Right lobe of liver (tissue), 6 donors: ENCODE measurements at regions of chrX and their contacts with region 1.

Region 1: GRCh38 chrX:153460845-153461244 is 9.5 kb downstream of the HAUS7 start:
- DNase-seq: peak in 1 of 3 donors; percentile 57
- ATAC-seq: peak; percentile 60 to 81 (median 68)
- H3K4me3 ChIP-seq: no peak overlapping the region
- H3K27ac ChIP-seq: no peak overlapping the region
- H3K4me1 ChIP-seq: no peaks in the 10 kb centered on the region
- H3K27me3 ChIP-seq: no peaks in the 10 kb centered on the region
- CTCF ChIP-seq: peak; percentile 32 to 65 (median 52)
- POLR2A ChIP-seq: no peak

Region 2: GRCh38 chrX:153507484-153508178 is 46.8 kb after region 1 on chrX:
- intact Hi-C with region 1: loop called in 1 of 2 experiments (anchors 5 kb)
- DNase-seq: peak; percentile 75 to 86 (median 83)
- ATAC-seq: peak; percentile 82 to 94 (median 94)
- H3K4me3 ChIP-seq: no peak overlapping the region
- H3K27ac ChIP-seq: no peak overlapping the region
- H3K4me1 ChIP-seq: no peaks in the 10 kb centered on the region
- H3K27me3 ChIP-seq: no peaks in the 10 kb centered on the region
- CTCF ChIP-seq: peak; percentile 89 to 95 (median 92)
- POLR2A ChIP-seq: no peak

Region 3: DNA sequence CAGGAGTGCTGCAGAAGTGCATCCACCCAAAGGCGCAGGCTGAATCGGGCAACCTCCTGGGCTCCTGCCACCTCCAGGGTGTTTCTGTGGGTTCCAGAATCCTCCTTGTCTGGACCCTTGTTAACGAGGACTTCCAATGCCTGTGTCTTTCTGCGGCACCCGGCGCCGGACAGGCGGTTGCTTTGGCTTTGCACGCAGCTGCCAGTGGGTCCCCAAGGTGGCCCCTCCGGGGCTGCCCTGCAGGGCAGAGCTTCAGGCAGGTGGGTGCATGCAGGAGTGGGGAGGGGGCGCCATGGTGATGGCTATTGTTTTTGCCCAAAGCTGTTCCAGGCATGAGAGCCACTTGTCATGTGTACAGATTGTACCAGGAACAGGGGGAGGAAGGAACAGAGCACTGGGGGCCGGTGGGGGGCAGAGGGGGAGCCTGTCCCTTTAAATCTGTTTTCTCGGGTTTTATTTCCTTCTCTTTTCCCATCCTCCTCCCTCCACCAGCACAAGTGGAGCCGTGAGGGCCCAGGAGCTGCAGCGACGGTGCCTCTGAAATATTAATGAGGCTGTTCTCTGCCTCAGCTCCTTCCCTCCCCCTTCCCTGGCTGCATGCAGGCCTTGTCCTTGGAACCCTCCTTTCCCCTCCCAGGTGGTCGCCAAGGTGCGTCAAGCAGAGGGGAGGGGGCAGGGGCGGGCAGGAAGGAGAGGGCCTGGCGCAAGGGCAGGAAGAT is 69.7 kb after region 1 on chrX:
- intact Hi-C with region 1: no loop called
- DNase-seq: no peak
- ATAC-seq: no peak
- H3K4me3 ChIP-seq: no peak overlapping the region
- H3K27ac ChIP-seq: no peak overlapping the region
- H3K4me1 ChIP-seq: no peaks in the 10 kb centered on the region
- H3K27me3 ChIP-seq: peaks cover 0 to 5% of the 10 kb centered on the region in 2 donors
- CTCF ChIP-seq: no peak
- POLR2A ChIP-seq: no peak

Region 4: GRCh38 chrX:153625271-153626024 is 164.6 kb after region 1 on chrX:
- intact Hi-C with region 1: no loop called
- DNase-seq: peak; percentile 71 to 84 (median 84)
- ATAC-seq: peak; percentile 29 to 42 (median 34)
- H3K4me3 ChIP-seq: peak overlapping the region; percentile 39 to 64 (median 59)
- H3K27ac ChIP-seq: peak overlapping the region; percentile 70 to 87 (median 72)
- H3K4me1 ChIP-seq: peaks cover 0 to 10% (median 0%) of the 10 kb centered on the region in 4 donors
- H3K27me3 ChIP-seq: no peaks in the 10 kb centered on the region
- CTCF ChIP-seq: no peak
- POLR2A ChIP-seq: peak; percentile 59

Region 5: GRCh38 chrX:154013614-154014360 is 552.9 kb after region 1 on chrX:
- intact Hi-C with region 1: no loop called
- DNase-seq: no peak
- ATAC-seq: peak; percentile 50 to 72 (median 62)
- H3K4me3 ChIP-seq: no peak overlapping the region
- H3K27ac ChIP-seq: no peak overlapping the region
- H3K4me1 ChIP-seq: peaks cover 0 to 4% (median 0%) of the 10 kb centered on the region in 4 donors
- H3K27me3 ChIP-seq: no peaks in the 10 kb centered on the region
- CTCF ChIP-seq: peak; percentile 73 to 93 (median 92)
- POLR2A ChIP-seq: no peak